RWPE1 (cell line): ENCODE measurements at regions of chr9 and their contacts with region 1.

Region 1: GRCh38 chr9:112086627-112087026 is 88.5 kb downstream of the SUSD1 start:
- DNase-seq: peak; percentile 43
- H3K27ac ChIP-seq: no peak overlapping the region
- CTCF ChIP-seq: peak; percentile 60

Region 2: GRCh38 chr9:112465352-112465751 is 378.7 kb after region 1 on chr9:
- CTCF ChIA-PET with region 1: no interaction called
- POLR2A ChIA-PET with region 1: no interaction called
- DNase-seq: no peak
- H3K27ac ChIP-seq: no peak overlapping the region
- CTCF ChIP-seq: no peak

Region 3: GRCh38 chr9:112496074-112496722 is 409.6 kb after region 1 on chr9:
- CTCF ChIA-PET with region 1: no interaction called
- POLR2A ChIA-PET with region 1: interaction called, 10 read pairs
- DNase-seq: no peak
- H3K27ac ChIP-seq: no peak overlapping the region
- CTCF ChIP-seq: no peak